Panc1 (cell line): ENCODE measurements at regions of chr18 and their contacts with region 1.

Region 1: GRCh38 chr18:36655074-36655473 is 173.7 kb downstream of the TPGS2 start:
- DNase-seq: no peak
- ATAC-seq: no peak
- H3K4me3 ChIP-seq: no peak overlapping the region
- H3K27ac ChIP-seq: no peak overlapping the region
- H3K4me1 ChIP-seq: no peaks in the 10 kb centered on the region
- H3K27me3 ChIP-seq: no peaks in the 10 kb centered on the region
- CTCF ChIP-seq: no peak

Region 2: DNA sequence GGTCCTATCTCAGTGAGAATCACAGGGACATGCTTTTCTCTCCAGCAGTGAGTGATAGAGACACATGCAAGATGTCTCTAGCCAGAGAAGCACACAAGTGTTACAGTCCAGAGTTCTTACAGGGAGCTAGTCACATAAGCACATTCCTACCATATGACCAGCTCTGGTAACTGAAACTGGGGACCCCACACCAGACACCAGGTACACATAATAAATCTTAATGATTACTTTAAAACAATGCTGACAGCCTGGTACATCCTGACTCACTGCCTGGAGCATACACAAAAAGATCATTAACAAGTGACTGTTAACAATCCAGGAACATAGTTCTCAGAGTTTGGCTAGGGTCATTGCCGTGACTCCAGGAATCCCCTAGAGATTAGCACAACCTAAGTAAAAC is 1019.9 kb before region 1 on chr18:
- CTCF ChIA-PET with region 1: no interaction called
- POLR2A ChIA-PET with region 1: no interaction called
- in situ Hi-C with region 1: no loop called
- intact Hi-C with region 1: no loop called
- DNase-seq: no peak
- ATAC-seq: peak; percentile 93
- H3K4me3 ChIP-seq: no peak overlapping the region
- H3K27ac ChIP-seq: peak overlapping the region; percentile 65
- H3K4me1 ChIP-seq: peaks cover 16% of the 10 kb centered on the region
- H3K27me3 ChIP-seq: no peaks in the 10 kb centered on the region
- CTCF ChIP-seq: no peak

Region 3: DNA sequence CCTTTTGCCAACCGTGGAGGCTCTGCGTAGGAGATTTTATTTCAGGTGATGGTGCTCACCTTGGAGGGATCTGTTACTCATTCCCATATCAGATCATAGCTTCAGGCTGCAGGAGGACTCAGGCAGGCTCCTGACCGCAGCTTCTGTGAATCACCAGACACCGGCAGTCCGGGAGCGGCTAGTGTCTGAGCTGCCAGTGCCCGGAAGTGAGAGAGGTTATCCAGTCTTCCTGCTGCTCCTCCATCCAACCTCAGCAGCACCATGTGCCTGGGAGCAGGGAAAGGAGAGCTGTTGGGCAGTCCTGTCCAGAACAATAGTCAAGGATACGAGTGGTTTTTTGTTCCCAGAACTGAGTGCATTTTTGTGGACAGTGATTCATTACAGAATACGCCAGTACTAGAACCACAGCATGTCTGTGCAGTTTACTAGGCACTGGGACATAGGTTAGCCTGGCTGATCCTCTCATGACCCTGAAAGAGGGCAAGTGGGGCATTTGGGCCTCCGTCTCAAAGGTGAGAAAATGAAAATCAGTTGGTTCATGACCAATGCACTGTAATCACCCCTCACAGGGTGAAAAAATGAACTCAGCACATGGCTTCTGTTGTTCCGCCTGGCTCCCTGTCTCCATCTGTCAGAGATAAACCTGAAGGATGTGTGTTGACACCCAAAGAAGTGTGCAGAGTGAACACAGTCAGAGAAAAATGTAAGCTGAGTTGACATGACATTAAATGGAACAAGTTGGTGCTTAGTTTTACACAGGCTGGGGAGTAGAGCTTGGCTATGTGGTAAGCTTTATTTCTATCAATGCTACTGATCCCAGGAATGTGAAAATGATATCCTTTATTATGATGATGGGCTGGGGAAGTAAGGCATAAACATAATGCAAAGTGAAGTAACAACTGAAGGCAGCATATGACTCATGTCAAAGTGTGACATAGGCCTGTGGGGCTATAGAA is 345.4 kb before region 1 on chr18:
- CTCF ChIA-PET with region 1: no interaction called
- POLR2A ChIA-PET with region 1: no interaction called
- in situ Hi-C with region 1: no loop called
- intact Hi-C with region 1: no loop called
- DNase-seq: peak; percentile 77
- ATAC-seq: peak; percentile 91
- H3K4me3 ChIP-seq: peak overlapping the region; percentile 28 to 43
- H3K27ac ChIP-seq: peak overlapping the region; percentile 85
- H3K4me1 ChIP-seq: peaks cover 64% of the 10 kb centered on the region
- H3K27me3 ChIP-seq: no peaks in the 10 kb centered on the region
- CTCF ChIP-seq: no peak

Region 4: GRCh38 chr18:36372903-36373311 is 282.2 kb before region 1 on chr18:
- CTCF ChIA-PET with region 1: no interaction called
- POLR2A ChIA-PET with region 1: no interaction called
- in situ Hi-C with region 1: no loop called
- intact Hi-C with region 1: no loop called
- DNase-seq: no peak
- ATAC-seq: no peak
- H3K4me3 ChIP-seq: no peak overlapping the region
- H3K27ac ChIP-seq: no peak overlapping the region
- H3K4me1 ChIP-seq: no peaks in the 10 kb centered on the region
- H3K27me3 ChIP-seq: no peaks in the 10 kb centered on the region
- CTCF ChIP-seq: no peak

Region 5: GRCh38 chr18:36572135-36572856 is 82.8 kb before region 1 on chr18:
- CTCF ChIA-PET with region 1: no interaction called
- POLR2A ChIA-PET with region 1: interaction called, 11 read pairs
- in situ Hi-C with region 1: no loop called
- intact Hi-C with region 1: no loop called
- DNase-seq: peak; percentile 46
- ATAC-seq: peak; percentile 88
- H3K4me3 ChIP-seq: no peak overlapping the region
- H3K27ac ChIP-seq: peak overlapping the region; percentile 9; the same call in 1 of the 2 replicates
- H3K4me1 ChIP-seq: peaks cover 8% of the 10 kb centered on the region; the same call in 1 of the 2 replicates
- H3K27me3 ChIP-seq: no peaks in the 10 kb centered on the region
- CTCF ChIP-seq: peak; percentile 81

Region 6: DNA sequence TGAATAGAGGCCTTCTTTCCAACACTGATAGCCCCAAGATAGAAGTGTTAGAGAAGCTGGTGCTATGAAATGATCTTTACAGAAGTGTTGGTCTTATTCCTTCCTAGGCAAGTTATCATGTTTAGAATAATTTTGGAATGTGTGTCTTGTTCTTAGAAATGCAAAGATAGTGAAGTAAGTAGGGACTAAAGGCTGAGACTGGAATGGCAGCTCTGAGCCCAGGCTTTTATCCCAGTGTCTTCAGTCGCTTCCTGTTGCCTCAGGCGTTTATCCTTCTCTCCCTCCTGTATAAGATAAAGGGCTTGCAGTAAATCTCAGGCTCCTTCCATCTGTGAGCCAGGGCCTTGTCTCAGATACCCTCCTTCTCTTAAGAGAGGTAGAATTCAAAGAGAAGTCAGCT is 44.4 kb before region 1 on chr18:
- CTCF ChIA-PET with region 1: no interaction called
- POLR2A ChIA-PET with region 1: interaction called, 11 read pairs
- in situ Hi-C with region 1: no loop called
- intact Hi-C with region 1: no loop called
- DNase-seq: no peak
- ATAC-seq: no peak
- H3K4me3 ChIP-seq: no peak overlapping the region
- H3K27ac ChIP-seq: no peak overlapping the region
- H3K4me1 ChIP-seq: no peaks in the 10 kb centered on the region
- H3K27me3 ChIP-seq: no peaks in the 10 kb centered on the region
- CTCF ChIP-seq: no peak

Region 7: GRCh38 chr18:36872329-36872728 is 217.3 kb after region 1 on chr18:
- CTCF ChIA-PET with region 1: no interaction called
- POLR2A ChIA-PET with region 1: no interaction called
- in situ Hi-C with region 1: no loop called
- intact Hi-C with region 1: no loop called
- DNase-seq: no peak
- ATAC-seq: no peak
- H3K4me3 ChIP-seq: no peak overlapping the region
- H3K27ac ChIP-seq: no peak overlapping the region
- H3K4me1 ChIP-seq: no peaks in the 10 kb centered on the region
- H3K27me3 ChIP-seq: no peaks in the 10 kb centered on the region
- CTCF ChIP-seq: no peak